GM13976 (cell line): ENCODE measurements at regions of chr14 and their contacts with region 1.

Region 1: GRCh38 chr14:20707622-20708021 is 19.1 kb downstream of the ANG start:
- DNase-seq: no peak
- CTCF ChIP-seq: no peak

Region 2: DNA sequence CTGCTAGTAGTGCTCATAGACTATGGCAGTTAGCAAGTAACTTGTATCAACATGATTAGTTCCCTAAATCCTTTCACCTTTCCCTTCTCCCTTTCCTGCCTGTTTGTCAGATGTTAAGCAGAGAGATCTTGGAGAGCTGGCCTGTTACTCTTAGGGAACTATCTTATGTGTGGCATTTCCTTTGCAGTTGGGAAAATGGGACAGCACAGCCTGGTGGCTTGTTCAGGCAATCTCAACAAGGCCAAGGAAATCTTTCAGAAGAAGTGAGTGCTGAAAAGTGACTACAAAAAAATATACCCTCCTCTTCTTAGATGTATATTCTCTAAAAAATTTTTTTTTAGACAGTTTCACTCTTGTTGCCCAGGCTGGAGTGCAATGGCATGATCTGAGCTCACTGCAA is 356.8 kb before region 1 on chr14:
- in situ Hi-C with region 1: no loop called
- DNase-seq: no peak
- CTCF ChIP-seq: no peak

Region 3: DNA sequence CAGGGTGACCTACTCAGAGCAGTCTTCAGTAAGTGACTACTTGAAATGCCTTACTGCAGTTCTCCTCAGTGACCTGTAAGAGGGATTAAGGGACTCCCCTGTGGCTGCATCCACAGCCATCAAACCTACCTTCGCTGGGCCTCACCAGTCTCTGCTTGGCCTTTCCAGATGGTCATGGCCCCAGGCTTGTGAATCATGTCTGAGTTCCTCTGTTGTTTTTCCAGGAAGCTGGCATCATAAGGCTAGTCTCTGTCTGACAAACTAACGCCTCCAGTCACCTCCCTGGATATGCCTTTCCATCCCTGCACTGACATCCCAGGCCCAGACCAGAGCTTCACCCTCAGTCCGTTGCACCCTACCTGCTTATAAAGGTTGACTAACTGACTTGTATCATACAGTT is 261.7 kb after region 1 on chr14:
- in situ Hi-C with region 1: loop called (anchors 10 kb)
- DNase-seq: no peak
- CTCF ChIP-seq: no peak